Gastrocnemius medialis (tissue), 4 donors: ENCODE measurements at regions of chr4 and their contacts with region 1.

Region 1: GRCh38 chr4:48949518-48950219 is 36.4 kb upstream of the CWH43 start:
- DNase-seq: no peak
- ATAC-seq: no peak
- H3K4me3 ChIP-seq: no peak overlapping the region
- H3K27ac ChIP-seq: no peak overlapping the region
- H3K4me1 ChIP-seq: no peaks in the 10 kb centered on the region
- H3K27me3 ChIP-seq: no peaks in the 10 kb centered on the region
- CTCF ChIP-seq: no peak
- POLR2A ChIP-seq: no peak

Region 2: GRCh38 chr4:48565362-48566033 is 384.2 kb before region 1 on chr4:
- in situ Hi-C with region 1: loop called in 1 of 4 experiments (anchors 10 kb)
- intact Hi-C with region 1: no loop called
- DNase-seq: no peak
- ATAC-seq: no peak
- H3K4me3 ChIP-seq: no peak overlapping the region
- H3K27ac ChIP-seq: no peak overlapping the region
- H3K4me1 ChIP-seq: no peaks in the 10 kb centered on the region
- H3K27me3 ChIP-seq: no peaks in the 10 kb centered on the region
- CTCF ChIP-seq: no peak
- POLR2A ChIP-seq: no peak